ENCODE measurements at regions of chr5 and their contacts with region 1.

Region 1: GRCh38 chr5:43313035-43313853 is at the start of gene HMGCS1:
- DNase-seq: peak; percentile 95 to 100 (median 98)
- ATAC-seq: peak; percentile 90
- H3K4me3 ChIP-seq: peak within 1 kb of the TSS; percentile 69 to 97
- H3K4me3 Mint-ChIP-seq: peak within 1 kb of the TSS; percentile 95
- H3K27ac ChIP-seq: peak within 1 kb of the TSS; percentile 84 to 98
- H3K27ac Mint-ChIP-seq: peak within 1 kb of the TSS; percentile 94
- H3K4me1 ChIP-seq: peaks cover 16% of the 10 kb centered on the region
- H3K4me1 Mint-ChIP-seq: peaks cover 40% of the 10 kb centered on the region
- H3K27me3 ChIP-seq: no peaks in the 10 kb centered on the region
- H3K27me3 Mint-ChIP-seq: no peaks in the 10 kb centered on the region
- CTCF ChIP-seq: peak; percentile 21
- total RNA-seq, gene HMGCS1: 74.1 to 74.7 TPM

Region 2: GRCh38 chr5:41924872-41925554 is 1388.2 kb before region 1 on chr5 and contains the start of gene FBXO4:
- CTCF ChIA-PET with region 1: no interaction called
- POLR2A ChIA-PET with region 1: no interaction called
- intact Hi-C with region 1: loop called (anchors 1 to 5 kb)
- DNase-seq: peak; percentile 79 to 96 (median 88)
- ATAC-seq: peak; percentile 96
- H3K4me3 ChIP-seq: peak within 1 kb of the TSS; percentile 79 to 87
- H3K4me3 Mint-ChIP-seq: peak within 1 kb of the TSS; percentile 87
- H3K27ac ChIP-seq: peak within 1 kb of the TSS; percentile 91 to 98
- H3K27ac Mint-ChIP-seq: peak within 1 kb of the TSS; percentile 99
- H3K4me1 ChIP-seq: peaks cover 16% of the 10 kb centered on the region
- H3K4me1 Mint-ChIP-seq: peaks cover 28% of the 10 kb centered on the region
- H3K27me3 ChIP-seq: no peaks in the 10 kb centered on the region
- H3K27me3 Mint-ChIP-seq: no peaks in the 10 kb centered on the region
- CTCF ChIP-seq: peak; percentile 57
- total RNA-seq, gene FBXO4: 4.4 to 4.7 TPM

Region 3: GRCh38 chr5:43019614-43020293 is 293.5 kb before region 1 on chr5:
- CTCF ChIA-PET with region 1: no interaction called
- POLR2A ChIA-PET with region 1: interaction called, 5 read pairs
- intact Hi-C with region 1: loop called in 1 of 2 experiments (anchors 1 kb)
- DNase-seq: peak; percentile 69 to 96 (median 84)
- ATAC-seq: peak; percentile 66
- H3K4me3 ChIP-seq: peak overlapping the region; percentile 70 to 73
- H3K4me3 Mint-ChIP-seq: peak overlapping the region; percentile 98
- H3K27ac ChIP-seq: peak overlapping the region; percentile 97 to 98
- H3K27ac Mint-ChIP-seq: peak overlapping the region; percentile 100
- H3K4me1 ChIP-seq: peaks cover 40% of the 10 kb centered on the region
- H3K4me1 Mint-ChIP-seq: peaks cover 43% of the 10 kb centered on the region
- H3K27me3 ChIP-seq: no peaks in the 10 kb centered on the region
- H3K27me3 Mint-ChIP-seq: no peaks in the 10 kb centered on the region
- CTCF ChIP-seq: peak; percentile 71

Region 4: GRCh38 chr5:43191740-43192557 is 121.3 kb before region 1 on chr5 and contains the start of gene NIM1K:
- CTCF ChIA-PET with region 1: no interaction called
- POLR2A ChIA-PET with region 1: no interaction called
- intact Hi-C with region 1: loop called in 1 of 2 experiments (anchors 2 kb)
- DNase-seq: peak in 7 of 9 experiments; percentile 1 to 56 (median 28)
- ATAC-seq: peak; percentile 37
- H3K4me3 ChIP-seq: peak within 1 kb of the TSS; percentile 47 to 56
- H3K4me3 Mint-ChIP-seq: peak within 1 kb of the TSS; percentile 89
- H3K27ac ChIP-seq: no peak within 1 kb of the TSS
- H3K27ac Mint-ChIP-seq: peak within 1 kb of the TSS; percentile 13
- H3K4me1 ChIP-seq: peaks cover 19% of the 10 kb centered on the region
- H3K4me1 Mint-ChIP-seq: peaks cover 27% of the 10 kb centered on the region
- H3K27me3 ChIP-seq: peaks cover 4 to 8% of the 10 kb centered on the region in 2 experiments
- H3K27me3 Mint-ChIP-seq: peaks cover 24% of the 10 kb centered on the region
- CTCF ChIP-seq: no peak
- total RNA-seq, gene NIM1K: 0.14 to 0.46 TPM

Region 5: DNA sequence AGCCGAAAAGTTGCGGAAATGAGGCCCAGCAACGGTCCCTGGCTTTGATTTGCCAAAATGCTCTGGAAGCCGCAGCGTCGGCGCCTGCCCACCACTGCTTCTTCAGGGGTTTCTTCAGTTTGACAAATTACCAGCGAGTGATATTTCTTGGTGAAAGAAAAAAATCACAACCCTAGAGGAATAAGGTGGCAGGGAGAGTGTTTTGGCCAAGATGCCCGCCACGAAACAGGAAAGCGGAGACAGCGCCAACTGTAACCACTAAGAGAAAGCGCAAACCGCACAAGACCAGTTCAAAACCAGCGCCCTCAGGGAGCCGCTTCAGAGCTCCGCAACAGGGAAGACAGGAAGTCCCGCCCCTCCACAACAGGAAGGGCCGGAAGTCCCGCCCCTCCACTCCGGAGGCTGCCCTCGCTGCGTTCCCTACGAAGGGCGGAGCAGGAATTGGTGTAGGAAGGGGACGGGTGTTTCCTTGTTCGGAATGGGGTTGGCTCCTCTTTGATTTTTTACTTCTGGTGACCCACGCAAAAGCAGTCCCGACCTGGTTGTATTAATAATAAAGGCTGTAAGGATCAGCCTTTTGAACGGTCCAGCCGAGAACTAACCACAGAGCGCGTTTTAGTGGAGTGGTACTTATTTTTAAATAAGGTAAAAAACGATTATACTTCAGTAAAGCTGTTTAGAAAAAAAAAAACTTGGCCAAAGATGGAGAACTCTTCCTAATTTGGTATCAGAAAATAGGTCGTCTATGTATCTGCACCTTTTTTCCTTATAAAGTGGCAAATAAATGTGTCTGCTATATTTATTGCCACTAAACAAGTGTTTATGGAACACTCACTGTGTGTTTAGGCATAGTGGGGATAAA is 201.8 kb after region 1 on chr5 and contains the start of gene C5orf34:
- CTCF ChIA-PET with region 1: no interaction called
- POLR2A ChIA-PET with region 1: no interaction called
- intact Hi-C with region 1: loop called (anchors 1 to 10 kb)
- DNase-seq: peak; percentile 84 to 97 (median 95)
- ATAC-seq: peak; percentile 86
- H3K4me3 ChIP-seq: peak within 1 kb of the TSS; percentile 68 to 77
- H3K4me3 Mint-ChIP-seq: peak within 1 kb of the TSS; percentile 97
- H3K27ac ChIP-seq: peak within 1 kb of the TSS; percentile 82
- H3K27ac Mint-ChIP-seq: peak within 1 kb of the TSS; percentile 95
- H3K4me1 ChIP-seq: peaks cover 15% of the 10 kb centered on the region
- H3K4me1 Mint-ChIP-seq: peaks cover 31% of the 10 kb centered on the region
- H3K27me3 ChIP-seq: no peaks in the 10 kb centered on the region
- H3K27me3 Mint-ChIP-seq: no peaks in the 10 kb centered on the region
- CTCF ChIP-seq: no peak
- total RNA-seq, gene C5orf34: 0.61 to 0.95 TPM

Region 6: GRCh38 chr5:44808435-44809214 is 1495.4 kb after region 1 on chr5 and contains the start of gene MRPS30:
- CTCF ChIA-PET with region 1: no interaction called
- POLR2A ChIA-PET with region 1: no interaction called
- intact Hi-C with region 1: loop called (anchors 2 to 5 kb)
- DNase-seq: peak; percentile 78 to 98 (median 89)
- ATAC-seq: peak; percentile 93
- H3K4me3 ChIP-seq: peak within 1 kb of the TSS; percentile 88 to 94
- H3K4me3 Mint-ChIP-seq: peak within 1 kb of the TSS; percentile 91
- H3K27ac ChIP-seq: peak within 1 kb of the TSS; percentile 88 to 89
- H3K27ac Mint-ChIP-seq: peak within 1 kb of the TSS; percentile 94
- H3K4me1 ChIP-seq: peaks cover 22% of the 10 kb centered on the region
- H3K4me1 Mint-ChIP-seq: peaks cover 36% of the 10 kb centered on the region
- H3K27me3 ChIP-seq: peaks cover 0 to 3% of the 10 kb centered on the region in 2 experiments
- H3K27me3 Mint-ChIP-seq: peaks cover 6% of the 10 kb centered on the region
- CTCF ChIP-seq: peak; percentile 48
- total RNA-seq, gene MRPS30: 51.5 to 52.4 TPM